GM18951 (cell line): ENCODE measurements at regions of chr17 and their contacts with region 1.

Region 1: GRCh38 chr17:31842183-31843069 is 16.6 kb downstream of the COPRS start:
- POLR2A ChIP-seq: no peak

Region 2: DNA sequence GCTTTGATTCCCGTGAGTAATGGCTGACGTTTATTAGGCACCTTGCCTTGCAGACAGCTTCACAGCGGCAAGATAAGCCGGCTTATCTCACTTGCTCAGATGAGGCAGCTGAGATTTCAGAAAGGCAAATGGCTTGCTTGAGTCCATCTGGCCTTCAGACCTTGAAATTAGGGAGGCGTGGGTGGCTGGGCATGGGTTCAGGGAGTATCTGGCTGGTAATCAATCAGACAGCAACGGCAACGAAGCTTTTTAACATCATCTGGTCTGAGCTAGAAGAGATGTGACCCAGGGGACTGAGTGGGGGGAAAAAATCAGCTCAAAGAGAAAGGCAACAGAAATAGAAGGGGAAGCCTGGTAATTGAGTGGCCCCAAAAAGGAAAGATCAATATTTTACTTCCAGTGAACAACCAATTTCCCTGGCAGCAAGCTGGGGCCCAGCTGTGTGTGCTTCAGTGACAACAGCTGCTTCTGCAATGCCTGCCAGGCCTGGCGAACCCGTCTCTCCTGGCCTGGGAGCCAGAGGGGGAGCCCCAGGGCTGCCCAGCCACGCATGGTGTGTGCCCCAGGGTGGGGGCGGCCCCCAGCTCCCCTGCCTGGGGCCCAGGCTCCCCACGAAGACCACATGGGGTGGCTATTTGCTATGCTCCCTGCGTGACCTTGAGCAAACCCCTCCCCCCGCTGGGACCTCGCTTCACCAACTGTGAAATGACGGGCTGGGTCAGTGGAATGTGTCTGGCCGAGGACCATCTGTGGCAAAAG is 417.0 kb before region 1 on chr17:
- in situ Hi-C with region 1: loop called (anchors 25 kb)
- POLR2A ChIP-seq: no peak

Region 3: DNA sequence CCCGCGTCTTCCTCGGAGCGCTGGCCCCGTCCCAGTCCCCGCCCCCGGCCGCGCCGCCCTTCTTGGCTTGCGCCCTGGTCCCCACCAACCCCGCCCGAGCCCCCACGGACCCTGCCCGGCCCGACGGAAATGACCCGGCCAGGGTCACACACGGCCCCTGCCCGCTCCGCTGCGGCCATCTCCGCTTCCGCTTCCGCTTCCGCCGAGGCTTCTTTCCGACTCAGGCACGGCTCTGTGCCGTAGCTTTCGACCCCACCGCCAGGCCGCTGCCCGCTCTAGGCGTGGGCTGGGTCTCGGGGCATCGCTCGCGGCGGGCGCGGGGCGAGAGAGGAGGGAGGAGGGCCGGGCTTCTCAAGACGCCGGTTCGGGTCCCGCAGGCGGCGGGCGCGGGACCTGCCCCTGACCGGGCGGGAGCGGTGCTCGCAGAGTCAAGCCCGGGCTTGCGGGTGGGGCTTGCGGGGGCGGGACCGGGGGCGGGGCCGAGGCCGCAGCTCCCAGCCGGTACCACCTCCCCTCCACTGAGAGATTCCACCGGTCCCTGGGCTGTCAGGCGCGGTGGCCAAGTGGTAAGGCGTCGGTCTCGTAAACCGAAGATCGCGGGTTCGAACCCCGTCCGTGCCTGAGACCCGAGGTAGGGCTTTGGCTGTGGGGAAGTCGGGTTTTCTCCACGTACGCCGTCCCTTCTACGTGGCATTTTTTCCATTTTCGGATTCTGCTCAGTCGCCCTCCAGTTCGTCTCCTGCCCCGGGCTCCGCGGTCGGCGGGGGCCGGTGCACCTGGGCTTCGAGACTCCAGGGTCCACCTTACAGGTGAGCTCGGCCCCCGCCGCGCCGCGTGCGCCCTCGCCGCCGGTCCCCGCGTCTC is 292.7 kb before region 1 on chr17:
- in situ Hi-C with region 1: loop called (anchors 10 kb)
- POLR2A ChIP-seq: peak; percentile 78

Region 4: GRCh38 chr17:31564883-31565301 is 277.5 kb before region 1 on chr17:
- in situ Hi-C with region 1: no loop called
- POLR2A ChIP-seq: no peak